OCI-LY7 (cell line): ENCODE measurements at regions of chr1 and their contacts with region 1.

Region 1: GRCh38 chr1:26695356-26696118 is at the start of gene ARID1A:
- DNase-seq: peak; percentile 98
- H3K4me3 ChIP-seq: peak within 1 kb of the TSS; percentile 87
- H3K27ac ChIP-seq: peak within 1 kb of the TSS; percentile 95
- H3K4me1 ChIP-seq: peaks cover 54% of the 10 kb centered on the region
- CTCF ChIP-seq: no peak
- total RNA-seq, gene ARID1A: 51.8 and 55.2 TPM in 2 replicates

Region 2: GRCh38 chr1:26541816-26542711 is 153.5 kb before region 1 on chr1:
- CTCF ChIA-PET with region 1: no interaction called
- POLR2A ChIA-PET with region 1: no interaction called
- intact Hi-C with region 1: loop called (anchors 2 kb)
- DNase-seq: peak; percentile 95
- H3K4me3 ChIP-seq: peak overlapping the region; percentile 64
- H3K27ac ChIP-seq: peak overlapping the region; percentile 97
- H3K4me1 ChIP-seq: peaks cover 97% of the 10 kb centered on the region
- CTCF ChIP-seq: peak; percentile 72

Region 3: DNA sequence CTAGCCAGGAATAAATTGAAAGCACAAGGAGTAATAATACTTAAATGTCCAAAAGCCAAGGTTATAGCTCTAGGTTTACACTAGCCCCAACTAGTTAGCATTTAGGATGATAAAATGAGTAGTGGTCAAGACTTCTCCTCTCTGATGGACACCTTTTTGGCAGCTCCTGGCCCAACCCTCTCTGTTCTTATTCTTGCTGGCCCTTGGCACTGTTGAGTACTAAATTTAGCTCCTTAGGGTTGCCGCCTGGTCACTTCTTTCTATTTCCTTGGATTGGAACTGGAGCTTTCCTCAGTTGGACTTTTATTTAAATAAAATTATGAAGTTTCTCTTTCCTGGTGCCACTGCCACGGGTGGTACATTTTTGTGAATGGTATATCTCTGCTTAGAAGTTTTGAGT is 28.6 kb after region 1 on chr1:
- CTCF ChIA-PET with region 1: no interaction called
- POLR2A ChIA-PET with region 1: interaction called, 6 read pairs
- intact Hi-C with region 1: loop called (anchors 2 kb)
- DNase-seq: no peak
- H3K4me3 ChIP-seq: peak overlapping the region; percentile 34
- H3K27ac ChIP-seq: peak overlapping the region; percentile 29
- H3K4me1 ChIP-seq: peaks cover 55% of the 10 kb centered on the region
- CTCF ChIP-seq: no peak

Region 4: GRCh38 chr1:26787706-26788514 is 92.4 kb after region 1 on chr1 and contains the start of gene PIGV:
- CTCF ChIA-PET with region 1: interaction called, 13 read pairs
- POLR2A ChIA-PET with region 1: interaction called, 36 read pairs
- intact Hi-C with region 1: loop called (anchors 1 kb)
- DNase-seq: peak; percentile 90
- H3K4me3 ChIP-seq: peak within 1 kb of the TSS; percentile 75
- H3K27ac ChIP-seq: peak within 1 kb of the TSS; percentile 91
- H3K4me1 ChIP-seq: peaks cover 59% of the 10 kb centered on the region
- CTCF ChIP-seq: no peak
- total RNA-seq, gene PIGV: 8.2 and 10.3 TPM in 2 replicates

Region 5: DNA sequence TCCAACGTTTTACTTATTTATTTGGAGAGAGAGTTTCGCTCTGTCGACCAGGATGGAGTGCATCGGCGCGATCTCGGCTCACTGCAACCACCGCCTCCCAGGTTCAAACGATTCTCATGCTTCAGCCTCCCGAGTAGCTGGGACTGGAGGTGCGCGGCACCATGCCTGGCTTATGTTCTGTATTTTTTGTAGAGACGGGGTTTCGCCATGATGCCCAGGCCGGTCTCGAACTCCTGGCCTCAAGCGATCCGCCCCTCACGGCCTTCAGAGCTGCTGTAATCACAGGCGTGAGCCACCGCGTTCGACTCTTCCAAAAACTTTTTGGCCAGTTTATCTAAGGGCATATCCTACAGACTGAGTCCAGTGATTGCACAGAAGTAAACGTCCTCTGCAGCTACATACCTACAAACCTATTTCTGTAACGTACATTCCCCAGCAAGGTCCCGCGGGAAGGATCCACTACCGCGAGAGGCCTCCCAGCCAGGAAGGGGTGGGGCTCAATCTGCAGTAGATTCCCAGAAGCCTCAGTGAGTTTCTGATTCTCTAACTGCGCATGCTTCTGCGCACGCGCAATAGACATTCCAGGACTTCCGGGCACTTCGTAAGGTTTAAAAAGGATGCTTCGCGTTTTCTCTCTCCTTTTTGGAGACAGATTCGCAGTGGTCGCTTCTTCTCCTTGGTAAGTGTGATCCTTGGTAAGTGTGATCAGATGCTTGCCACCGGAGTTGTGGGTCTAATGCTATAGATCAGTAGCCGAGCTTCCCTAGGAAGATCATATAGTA is 1810.1 kb after region 1 on chr1 and contains the start of gene RCC1:
- CTCF ChIA-PET with region 1: interaction called, 12 read pairs
- POLR2A ChIA-PET with region 1: no interaction called
- intact Hi-C with region 1: no loop called
- DNase-seq: peak; percentile 99
- H3K4me3 ChIP-seq: peak within 1 kb of the TSS; percentile 85
- H3K27ac ChIP-seq: peak within 1 kb of the TSS; percentile 94
- H3K4me1 ChIP-seq: peaks cover 42% of the 10 kb centered on the region
- CTCF ChIP-seq: no peak
- total RNA-seq, gene RCC1: 87.6 and 101 TPM in 2 replicates